ENCODE measurements at regions of chr17 and their contacts with region 1.

Region 1: GRCh38 chr17:57987580-57988421 is at the start of gene VEZF1:
- DNase-seq: peak; percentile 80 to 81 (median 81)
- ATAC-seq: peak; percentile 46 to 74 (median 70)
- H3K4me3 ChIP-seq: peak within 1 kb of the TSS; percentile 76 to 85 (median 83)
- H3K27ac ChIP-seq: peak within 1 kb of the TSS; percentile 85 to 89 (median 87)
- H3K4me1 ChIP-seq: peaks cover 0 to 37% (median 9%) of the 10 kb centered on the region in 4 donors
- H3K27me3 ChIP-seq: no peaks in the 10 kb centered on the region
- CTCF ChIP-seq: no peak
- POLR2A ChIP-seq: peak; percentile 33
- total RNA-seq, gene VEZF1: 13.0 to 19.3 (median 14.6) TPM

Region 2: GRCh38 chr17:57892146-57892828 is 95.5 kb before region 1 on chr17:
- intact Hi-C with region 1: loop called (anchors 5 to 10 kb)
- DNase-seq: peak; percentile 79 to 88 (median 86)
- ATAC-seq: peak; percentile 78 to 90 (median 87)
- H3K4me3 ChIP-seq: no peak overlapping the region
- H3K27ac ChIP-seq: peak overlapping the region; percentile 35 to 80 (median 78)
- H3K4me1 ChIP-seq: peaks cover 0 to 27% (median 0%) of the 10 kb centered on the region in 4 donors
- H3K27me3 ChIP-seq: no peaks in the 10 kb centered on the region
- CTCF ChIP-seq: peak; percentile 92 to 98 (median 95)
- POLR2A ChIP-seq: no peak

Measured in right lobe of liver (tissue), 6 donors.